Adrenal gland (tissue), 19 donors: ENCODE measurements at regions of chr3 and their contacts with region 1.

Region 1: GRCh38 chr3:128603811-128604775 is 46.5 kb downstream of the RPN1 start:
- DNase-seq: no peak
- H3K4me3 ChIP-seq: no peak overlapping the region
- H3K27ac ChIP-seq: no peak overlapping the region
- H3K4me1 ChIP-seq: peaks cover 8 to 10% of the 10 kb centered on the region in 2 donors
- H3K27me3 ChIP-seq: no peaks in the 10 kb centered on the region
- CTCF ChIP-seq: no peak
- POLR2A ChIP-seq: no peak

Region 2: GRCh38 chr3:128095222-128095703 is 508.8 kb before region 1 on chr3:
- intact Hi-C with region 1: loop called in 1 of 2 experiments (anchors 10 kb)
- DNase-seq: peak; percentile 83 to 94 (median 88)
- H3K4me3 ChIP-seq: no peak overlapping the region
- H3K27ac ChIP-seq: no peak overlapping the region
- H3K4me1 ChIP-seq: no peaks in the 10 kb centered on the region
- H3K27me3 ChIP-seq: no peaks in the 10 kb centered on the region
- CTCF ChIP-seq: peak; percentile 78 to 93 (median 84)
- POLR2A ChIP-seq: no peak

Region 3: GRCh38 chr3:128426128-128426921 is 177.8 kb before region 1 on chr3:
- intact Hi-C with region 1: loop called (anchors 5 kb)
- DNase-seq: peak in 4 of 7 donors; percentile 25 to 56 (median 40)
- H3K4me3 ChIP-seq: peak overlapping the region in 1 of 4 donors; percentile 33
- H3K27ac ChIP-seq: no peak overlapping the region
- H3K4me1 ChIP-seq: peaks cover 0 to 9% of the 10 kb centered on the region in 2 donors
- H3K27me3 ChIP-seq: no peaks in the 10 kb centered on the region
- CTCF ChIP-seq: peak in 5 of 6 experiments; percentile 31 to 98 (median 95)
- POLR2A ChIP-seq: no peak

Region 4: GRCh38 chr3:128775912-128776542 is 171.9 kb after region 1 on chr3:
- intact Hi-C with region 1: no loop called
- DNase-seq: no peak
- H3K4me3 ChIP-seq: no peak overlapping the region
- H3K27ac ChIP-seq: no peak overlapping the region
- H3K4me1 ChIP-seq: peaks cover 0 to 9% of the 10 kb centered on the region in 2 donors
- H3K27me3 ChIP-seq: no peaks in the 10 kb centered on the region
- CTCF ChIP-seq: no peak
- POLR2A ChIP-seq: no peak